CD14-positive monocyte (primary cell): ENCODE measurements at regions of chr21 and their contacts with region 1.

Region 1: GRCh38 chr21:14545906-14546480 is at the start of gene SAMSN1:
- DNase-seq: peak; percentile 80 to 93 (median 91)
- H3K4me3 ChIP-seq: peak within 1 kb of the TSS; percentile 70 to 100 (median 94)
- H3K4me3 Mint-ChIP-seq: peak within 1 kb of the TSS; percentile 91 to 94
- H3K27ac ChIP-seq: peak within 1 kb of the TSS; percentile 12 to 87
- H3K27ac Mint-ChIP-seq: peak within 1 kb of the TSS; percentile 85 to 95 (median 91)
- H3K4me1 ChIP-seq: peaks cover 63 to 84% of the 10 kb centered on the region in 2 donors
- H3K4me1 Mint-ChIP-seq: peaks cover 52% of the 10 kb centered on the region
- H3K27me3 ChIP-seq: no peaks in the 10 kb centered on the region
- H3K27me3 Mint-ChIP-seq: no peaks in the 10 kb centered on the region
- CTCF ChIP-seq: no peak
- polyA plus RNA-seq, gene SAMSN1: 20.9 to 38.6 (median 31.0) TPM

Region 2: GRCh38 chr21:14482165-14482564 is 63.8 kb before region 1 on chr21:
- intact Hi-C with region 1: loop called (anchors 5 to 10 kb)
- DNase-seq: peak; percentile 90 to 96 (median 94)
- H3K4me3 ChIP-seq: peak overlapping the region in 1 of 3 experiments; percentile 38
- H3K4me3 Mint-ChIP-seq: peak overlapping the region; percentile 45 to 76
- H3K27ac ChIP-seq: peak overlapping the region; percentile 66 to 95
- H3K27ac Mint-ChIP-seq: peak overlapping the region; percentile 91 to 98 (median 95)
- H3K4me1 ChIP-seq: peaks cover 39 to 42% of the 10 kb centered on the region in 2 donors
- H3K4me1 Mint-ChIP-seq: peaks cover 59% of the 10 kb centered on the region
- H3K27me3 ChIP-seq: no peaks in the 10 kb centered on the region
- H3K27me3 Mint-ChIP-seq: peaks cover 0 to 1% (median 0%) of the 10 kb centered on the region in 3 donors
- CTCF ChIP-seq: no peak

Region 3: GRCh38 chr21:14591882-14592281 is 45.9 kb after region 1 on chr21:
- intact Hi-C with region 1: loop called in 1 of 2 experiments (anchors 10 kb)
- DNase-seq: peak; percentile 93 to 99 (median 96)
- H3K4me3 ChIP-seq: peak overlapping the region in 1 of 3 experiments; percentile 12
- H3K4me3 Mint-ChIP-seq: peak overlapping the region in 1 of 2 donors; percentile 22
- H3K27ac ChIP-seq: peak overlapping the region; percentile 47 to 88
- H3K27ac Mint-ChIP-seq: peak overlapping the region; percentile 91 to 99 (median 97)
- H3K4me1 ChIP-seq: peaks cover 28 to 44% of the 10 kb centered on the region in 2 donors
- H3K4me1 Mint-ChIP-seq: peaks cover 38% of the 10 kb centered on the region
- H3K27me3 ChIP-seq: no peaks in the 10 kb centered on the region
- H3K27me3 Mint-ChIP-seq: no peaks in the 10 kb centered on the region
- CTCF ChIP-seq: no peak

Region 4: GRCh38 chr21:15221799-15222386 is 675.9 kb after region 1 on chr21:
- intact Hi-C with region 1: loop called in 1 of 2 experiments (anchors 10 kb)
- DNase-seq: peak; percentile 92 to 96 (median 95)
- H3K4me3 ChIP-seq: peak overlapping the region in 1 of 3 experiments; percentile 35
- H3K4me3 Mint-ChIP-seq: peak overlapping the region; percentile 20 to 51
- H3K27ac ChIP-seq: peak overlapping the region; percentile 23 to 88
- H3K27ac Mint-ChIP-seq: peak overlapping the region; percentile 87 to 97 (median 93)
- H3K4me1 ChIP-seq: peaks cover 49 to 61% of the 10 kb centered on the region in 2 donors
- H3K4me1 Mint-ChIP-seq: peaks cover 53% of the 10 kb centered on the region
- H3K27me3 ChIP-seq: no peaks in the 10 kb centered on the region
- H3K27me3 Mint-ChIP-seq: peaks cover 0 to 3% (median 0%) of the 10 kb centered on the region in 3 donors
- CTCF ChIP-seq: no peak